HepG2 (cell line): ENCODE measurements at regions of chr13 and their contacts with region 1.

Region 1: DNA sequence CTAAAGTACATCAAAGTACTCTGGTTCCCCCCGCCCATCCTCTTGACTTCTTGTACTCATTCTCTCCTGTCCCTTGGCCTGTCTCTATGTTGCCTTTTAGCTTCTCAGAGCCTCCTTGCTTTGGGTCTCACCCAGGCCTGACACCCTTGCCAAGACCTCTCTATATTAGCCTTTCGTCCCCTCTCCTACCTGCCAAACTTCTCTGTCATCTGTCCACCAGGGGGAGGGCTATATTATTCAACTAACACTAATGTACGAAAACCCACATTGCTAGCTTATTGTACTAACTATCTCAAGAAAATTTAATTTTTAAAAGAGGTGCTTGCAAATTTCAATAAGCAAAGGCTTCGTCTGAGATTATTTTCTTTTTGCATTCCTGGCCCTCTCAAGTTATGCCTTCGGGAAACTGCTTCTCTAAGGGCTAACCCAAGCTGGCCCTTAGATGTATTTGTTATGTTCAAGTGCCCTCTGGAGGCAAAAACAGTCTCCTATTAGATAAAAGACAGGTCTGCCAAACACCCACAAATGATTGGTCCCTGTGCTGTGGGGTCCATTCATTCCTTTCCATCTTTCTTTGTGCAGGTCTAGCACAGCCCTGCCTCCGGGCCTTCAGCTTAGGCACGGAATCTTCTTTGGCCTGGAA is 6.3 kb upstream of the MRPS31 start:
- DNase-seq: peak; percentile 71
- ATAC-seq: peak; percentile 86
- H3K4me3 ChIP-seq: peak overlapping the region; percentile 47 to 60 (median 59)
- H3K27ac ChIP-seq: peak overlapping the region; percentile 5
- H3K4me1 ChIP-seq: peaks cover 82% of the 10 kb centered on the region
- H3K27me3 ChIP-seq: no peaks in the 10 kb centered on the region
- CTCF ChIP-seq: peak; percentile 66
- EP300 ChIP-seq: no peak
- POLR2A ChIP-seq: no peak
- RAD21 ChIP-seq: no peak

Region 2: GRCh38 chr13:39684531-39685137 is 1092.7 kb before region 1 on chr13:
- CTCF ChIA-PET with region 1: interaction called, 7 read pairs
- POLR2A ChIA-PET with region 1: no interaction called
- in situ Hi-C with region 1: no loop called
- intact Hi-C with region 1: loop called (anchors 2 kb)
- DNase-seq: peak; percentile 31
- ATAC-seq: peak; percentile 44; the same call in 1 of the 3 replicates
- H3K4me3 ChIP-seq: no peak overlapping the region
- H3K27ac ChIP-seq: no peak overlapping the region
- H3K4me1 ChIP-seq: no peaks in the 10 kb centered on the region
- H3K27me3 ChIP-seq: no peaks in the 10 kb centered on the region
- CTCF ChIP-seq: peak; percentile 33
- EP300 ChIP-seq: no peak
- POLR2A ChIP-seq: no peak
- RAD21 ChIP-seq: no peak

Region 3: GRCh38 chr13:40130871-40131636 is 646.2 kb before region 1 on chr13:
- CTCF ChIA-PET with region 1: no interaction called
- POLR2A ChIA-PET with region 1: no interaction called
- in situ Hi-C with region 1: no loop called
- intact Hi-C with region 1: no loop called
- DNase-seq: peak; percentile 36
- ATAC-seq: peak; percentile 72
- H3K4me3 ChIP-seq: no peak overlapping the region
- H3K27ac ChIP-seq: no peak overlapping the region
- H3K4me1 ChIP-seq: peaks cover 11% of the 10 kb centered on the region
- H3K27me3 ChIP-seq: no peaks in the 10 kb centered on the region
- CTCF ChIP-seq: no peak
- EP300 ChIP-seq: no peak
- POLR2A ChIP-seq: no peak
- RAD21 ChIP-seq: no peak

Region 4: DNA sequence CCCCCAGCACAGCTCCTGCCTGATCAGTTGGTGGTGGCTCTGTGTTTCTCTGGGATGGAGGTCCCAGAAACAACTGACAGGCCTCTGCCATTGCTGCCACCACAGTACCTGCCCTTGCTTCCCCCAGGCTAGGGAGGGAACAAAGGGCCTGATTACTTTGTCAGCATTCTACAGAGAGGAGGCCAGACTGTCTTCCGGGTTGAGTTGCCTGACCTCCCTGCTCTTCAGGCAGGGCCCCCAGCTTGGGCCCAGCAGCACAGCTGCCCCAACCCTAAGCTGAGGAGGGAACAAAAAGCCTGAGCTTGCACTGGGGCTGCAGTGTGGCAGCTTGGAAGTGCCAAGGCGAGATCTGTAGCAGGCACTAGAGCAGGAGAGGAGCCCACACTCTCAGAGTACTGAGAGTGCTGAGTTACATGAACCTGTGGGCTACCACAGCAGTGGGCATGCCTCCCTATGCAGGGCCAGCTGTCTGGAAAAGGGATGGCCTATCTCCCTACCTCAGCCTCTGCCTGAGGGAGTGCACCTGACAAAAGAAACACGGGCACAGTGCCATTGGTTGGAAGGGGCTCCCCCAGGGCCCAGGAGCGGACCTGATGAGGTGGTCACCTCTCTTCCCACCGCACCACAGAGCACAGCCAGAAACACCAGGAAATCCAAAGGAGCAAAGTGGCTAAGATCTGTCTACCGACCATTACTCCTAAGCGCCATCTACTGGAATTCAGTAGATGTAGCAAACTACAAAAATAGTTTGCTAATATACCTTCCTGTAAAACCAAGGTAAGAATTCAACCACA is 36.6 kb after region 1 on chr13:
- CTCF ChIA-PET with region 1: interaction called, 24 read pairs
- POLR2A ChIA-PET with region 1: interaction called, 3 read pairs
- in situ Hi-C with region 1: no loop called
- intact Hi-C with region 1: loop called (anchors 1 kb)
- DNase-seq: peak; percentile 30
- ATAC-seq: peak; percentile 87
- H3K4me3 ChIP-seq: no peak overlapping the region
- H3K27ac ChIP-seq: peak overlapping the region; percentile 58
- H3K4me1 ChIP-seq: peaks cover 15% of the 10 kb centered on the region
- H3K27me3 ChIP-seq: no peaks in the 10 kb centered on the region
- CTCF ChIP-seq: peak; percentile 80
- EP300 ChIP-seq: no peak
- POLR2A ChIP-seq: no peak
- RAD21 ChIP-seq: peak; percentile 60